ENCODE measurements at regions of chr3 and their contacts with region 1.

Region 1: GRCh38 chr3:73100741-73101559 is 39.5 kb downstream of the EBLN2 start:
- DNase-seq: peak; percentile 50
- ATAC-seq: peak; percentile 83
- H3K4me3 Mint-ChIP-seq: no peak overlapping the region
- H3K27ac Mint-ChIP-seq: no peak overlapping the region
- H3K4me1 Mint-ChIP-seq: no peaks in the 10 kb centered on the region
- H3K27me3 Mint-ChIP-seq: peaks cover 9% of the 10 kb centered on the region
- CTCF ChIP-seq: peak; percentile 69

Region 2: DNA sequence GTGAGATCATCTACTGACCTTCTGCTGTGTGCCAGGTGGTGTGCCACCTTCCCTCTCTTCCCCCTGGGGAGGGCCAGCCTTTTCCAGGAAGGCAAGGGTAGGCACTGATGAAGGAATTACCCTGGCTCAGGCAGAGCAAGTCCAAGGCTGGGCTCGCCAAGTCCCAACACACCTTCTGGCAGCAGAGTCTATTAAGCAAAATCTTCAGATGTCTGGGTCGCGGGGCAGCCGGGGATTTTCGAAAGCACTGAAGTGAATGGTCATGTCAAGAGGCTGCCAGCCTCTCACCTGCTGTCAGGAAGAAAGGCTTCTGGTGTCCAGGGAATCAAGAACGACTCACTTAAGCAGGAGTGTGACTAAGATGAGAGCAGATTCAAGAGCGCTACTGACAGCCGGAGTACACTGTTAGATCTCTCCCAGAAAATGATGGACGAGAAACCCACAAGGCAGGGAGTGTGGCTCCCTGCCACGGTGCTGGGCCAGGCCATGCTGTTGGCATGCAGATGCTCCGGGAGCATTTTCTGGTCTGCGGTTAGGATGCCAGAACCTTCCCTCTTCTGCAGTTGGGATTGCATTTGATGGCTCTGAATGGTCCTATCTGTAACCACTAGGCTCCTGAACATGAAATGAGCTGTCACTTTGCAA is 732.5 kb before region 1 on chr3:
- CTCF ChIA-PET with region 1: no interaction called
- POLR2A ChIA-PET with region 1: no interaction called
- intact Hi-C with region 1: no loop called
- DNase-seq: no peak
- ATAC-seq: no peak
- H3K4me3 Mint-ChIP-seq: no peak overlapping the region
- H3K27ac Mint-ChIP-seq: no peak overlapping the region
- H3K4me1 Mint-ChIP-seq: peaks cover 2% of the 10 kb centered on the region
- H3K27me3 Mint-ChIP-seq: peaks cover 4% of the 10 kb centered on the region
- CTCF ChIP-seq: no peak

Region 3: DNA sequence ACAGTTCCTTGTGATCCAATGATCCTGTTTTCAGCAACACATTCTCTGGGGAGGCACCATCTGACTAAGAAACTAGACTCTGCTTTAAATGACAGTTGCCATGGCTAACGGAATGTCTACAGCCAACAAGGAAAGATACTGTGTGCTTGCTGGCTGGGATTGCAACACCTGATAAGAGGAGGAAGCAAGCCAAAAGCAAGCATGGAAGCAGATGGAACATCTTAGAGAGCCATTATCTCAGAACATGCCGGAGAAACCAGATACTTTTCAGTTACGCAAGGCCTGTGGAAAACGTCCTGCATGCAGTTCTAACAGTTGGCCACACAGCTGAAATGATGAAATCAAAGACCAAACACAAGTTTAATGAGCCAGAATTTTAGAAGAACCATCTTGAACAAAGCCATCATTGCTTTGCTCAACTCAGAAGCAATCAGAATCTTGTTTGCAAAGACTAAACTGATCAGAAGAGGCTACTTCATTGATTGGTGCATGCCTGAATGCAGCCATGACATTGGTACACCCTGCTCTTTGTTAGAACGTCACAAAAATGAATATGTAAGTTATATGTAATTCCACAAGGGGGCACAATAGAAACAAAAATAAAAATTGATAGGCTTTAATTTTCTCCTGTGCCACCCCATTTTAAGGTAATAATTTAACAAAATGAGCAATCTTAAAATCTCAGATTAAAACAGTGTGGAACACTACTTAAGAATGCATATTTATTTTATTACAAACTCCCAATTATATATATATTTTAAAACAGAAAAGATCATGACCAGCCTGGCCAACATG is 162.3 kb before region 1 on chr3:
- CTCF ChIA-PET with region 1: no interaction called
- POLR2A ChIA-PET with region 1: no interaction called
- intact Hi-C with region 1: no loop called
- DNase-seq: no peak
- ATAC-seq: peak; percentile 81
- H3K4me3 Mint-ChIP-seq: no peak overlapping the region
- H3K27ac Mint-ChIP-seq: no peak overlapping the region
- H3K4me1 Mint-ChIP-seq: no peaks in the 10 kb centered on the region
- H3K27me3 Mint-ChIP-seq: peaks cover 4% of the 10 kb centered on the region
- CTCF ChIP-seq: no peak

Region 4: DNA sequence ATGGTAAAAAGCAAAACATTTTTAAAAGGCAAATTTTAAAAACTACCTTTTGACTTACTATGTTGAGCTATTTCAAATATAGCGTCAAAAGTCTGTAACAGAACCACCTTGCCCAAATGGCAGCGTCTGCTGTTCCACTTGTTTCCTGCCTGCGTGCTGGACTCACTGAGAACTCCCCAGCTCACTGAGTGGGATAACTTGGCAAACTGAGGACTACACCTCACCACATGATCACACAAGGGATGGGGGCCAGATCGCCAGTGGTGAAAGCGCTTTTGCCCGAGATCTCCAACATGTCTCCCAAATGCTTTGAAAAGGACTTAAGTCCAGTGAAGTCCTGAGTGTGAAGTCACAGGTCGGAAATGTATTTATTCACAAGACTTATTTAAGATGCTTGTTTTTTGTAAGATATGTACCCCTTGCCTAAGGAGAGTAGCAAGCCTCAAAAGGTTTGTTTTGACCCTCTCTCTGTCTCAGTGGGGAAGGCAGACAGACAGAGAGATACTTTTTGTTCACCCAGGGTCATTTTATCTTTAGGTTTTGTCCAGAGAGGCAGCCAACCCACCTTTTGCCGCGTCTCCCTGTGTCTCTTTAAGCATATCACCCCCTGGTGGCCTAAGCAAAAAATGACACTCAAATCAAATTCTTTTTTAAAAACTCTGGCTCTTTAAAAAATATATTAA is 331.2 kb after region 1 on chr3:
- CTCF ChIA-PET with region 1: no interaction called
- POLR2A ChIA-PET with region 1: interaction called, 3 read pairs
- intact Hi-C with region 1: loop called (anchors 1 kb)
- DNase-seq: no peak
- ATAC-seq: no peak
- H3K4me3 Mint-ChIP-seq: no peak overlapping the region
- H3K27ac Mint-ChIP-seq: no peak overlapping the region
- H3K4me1 Mint-ChIP-seq: no peaks in the 10 kb centered on the region
- H3K27me3 Mint-ChIP-seq: no peaks in the 10 kb centered on the region
- CTCF ChIP-seq: no peak

Measured in activated B cell treated with CpG ODN at 0.5 μM for 24 hours (primary cell).